ENCODE measurements at regions of chr2 and their contacts with region 1.

Region 1: GRCh38 chr2:210399440-210400041 is 77.0 kb downstream of the LANCL1 start:
- DNase-seq: no peak
- H3K4me3 ChIP-seq: no peak overlapping the region
- H3K27ac ChIP-seq: no peak overlapping the region
- H3K4me1 ChIP-seq: no peaks in the 10 kb centered on the region
- H3K27me3 ChIP-seq: no peaks in the 10 kb centered on the region
- CTCF ChIP-seq: peak; percentile 66

Region 2: GRCh38 chr2:209977386-209978239 is 421.9 kb before region 1 on chr2:
- CTCF ChIA-PET with region 1: no interaction called
- POLR2A ChIA-PET with region 1: no interaction called
- intact Hi-C with region 1: loop called (anchors 5 kb)
- DNase-seq: no peak
- H3K4me3 ChIP-seq: no peak overlapping the region
- H3K27ac ChIP-seq: no peak overlapping the region
- H3K4me1 ChIP-seq: no peaks in the 10 kb centered on the region
- H3K27me3 ChIP-seq: no peaks in the 10 kb centered on the region
- CTCF ChIP-seq: peak; percentile 67

Region 3: GRCh38 chr2:210195101-210195852 is 204.3 kb before region 1 on chr2:
- CTCF ChIA-PET with region 1: no interaction called
- POLR2A ChIA-PET with region 1: no interaction called
- intact Hi-C with region 1: no loop called
- DNase-seq: peak in 1 of 2 experiments; percentile 36
- H3K4me3 ChIP-seq: no peak overlapping the region
- H3K27ac ChIP-seq: no peak overlapping the region
- H3K4me1 ChIP-seq: no peaks in the 10 kb centered on the region
- H3K27me3 ChIP-seq: no peaks in the 10 kb centered on the region
- CTCF ChIP-seq: peak; percentile 68

Region 4: DNA sequence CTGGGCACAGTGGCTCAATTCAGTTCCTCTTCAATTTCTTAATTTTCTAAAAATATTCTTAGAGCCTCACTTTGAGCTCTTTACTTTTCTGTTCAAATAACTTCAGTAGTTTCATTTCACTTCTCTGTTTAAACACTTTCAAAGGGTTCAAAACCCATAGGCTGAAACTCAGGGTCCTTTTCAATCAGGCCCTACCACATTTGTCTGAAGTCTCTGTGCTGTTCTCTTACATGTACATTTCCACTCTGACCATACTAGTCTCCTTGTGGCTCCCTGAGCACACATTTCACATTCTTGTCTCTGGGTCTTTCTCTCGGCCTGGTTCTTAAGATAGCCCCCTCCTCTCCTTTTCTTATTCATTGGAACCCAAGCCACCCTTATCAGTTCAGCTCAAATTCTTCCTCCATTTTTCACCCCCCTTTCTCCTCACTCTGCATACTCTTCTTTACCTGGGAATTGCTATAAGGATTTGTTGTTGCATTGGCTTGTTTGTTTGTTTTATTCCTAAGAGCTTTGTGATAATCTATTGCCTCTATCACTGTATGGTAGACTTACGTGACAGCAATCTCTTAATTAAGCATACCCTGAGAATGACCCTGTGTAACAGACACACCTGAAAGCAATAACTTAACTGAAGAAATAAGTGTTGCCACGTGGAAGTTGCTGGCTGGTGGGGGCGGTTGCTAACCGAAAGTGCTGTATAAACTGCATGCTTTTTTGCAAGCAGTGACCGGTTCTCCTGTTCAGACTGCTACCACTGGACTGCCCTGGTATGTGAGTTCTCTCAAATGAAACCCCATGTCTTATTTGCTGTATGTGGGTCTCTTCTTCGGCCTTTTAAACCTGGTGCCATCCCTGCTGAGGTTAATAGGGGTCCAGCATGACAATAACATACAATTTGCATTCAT is 146.6 kb before region 1 on chr2:
- CTCF ChIA-PET with region 1: no interaction called
- POLR2A ChIA-PET with region 1: no interaction called
- intact Hi-C with region 1: loop called (anchors 5 kb)
- DNase-seq: no peak
- H3K4me3 ChIP-seq: no peak overlapping the region
- H3K27ac ChIP-seq: no peak overlapping the region
- H3K4me1 ChIP-seq: no peaks in the 10 kb centered on the region
- H3K27me3 ChIP-seq: no peaks in the 10 kb centered on the region
- CTCF ChIP-seq: no peak

Region 5: DNA sequence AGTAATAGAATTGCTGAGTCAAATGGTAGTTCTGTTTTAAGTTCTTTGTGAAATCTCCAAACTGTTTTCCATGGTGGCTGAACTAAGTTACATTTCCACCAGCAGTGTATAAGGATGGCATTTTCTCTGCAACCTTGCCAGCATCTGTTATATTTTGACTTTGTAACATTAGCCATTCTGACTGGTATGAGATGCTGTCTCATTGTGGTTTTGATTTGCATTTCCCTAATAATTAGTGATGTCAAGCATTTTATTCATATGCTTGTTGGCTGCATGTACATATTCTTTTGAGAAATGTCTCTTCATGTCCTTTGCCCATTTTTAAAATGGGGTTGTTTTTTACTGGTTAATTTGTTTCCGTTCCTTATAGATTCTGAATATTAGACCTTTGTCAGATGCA is 13.1 kb after region 1 on chr2:
- CTCF ChIA-PET with region 1: no interaction called
- POLR2A ChIA-PET with region 1: interaction called, 22 read pairs
- intact Hi-C with region 1: no loop called
- DNase-seq: no peak
- H3K4me3 ChIP-seq: no peak overlapping the region
- H3K27ac ChIP-seq: no peak overlapping the region
- H3K4me1 ChIP-seq: no peaks in the 10 kb centered on the region
- H3K27me3 ChIP-seq: no peaks in the 10 kb centered on the region
- CTCF ChIP-seq: no peak